Caco-2 (cell line): ENCODE measurements at regions of chr3 and their contacts with region 1.

Region 1: DNA sequence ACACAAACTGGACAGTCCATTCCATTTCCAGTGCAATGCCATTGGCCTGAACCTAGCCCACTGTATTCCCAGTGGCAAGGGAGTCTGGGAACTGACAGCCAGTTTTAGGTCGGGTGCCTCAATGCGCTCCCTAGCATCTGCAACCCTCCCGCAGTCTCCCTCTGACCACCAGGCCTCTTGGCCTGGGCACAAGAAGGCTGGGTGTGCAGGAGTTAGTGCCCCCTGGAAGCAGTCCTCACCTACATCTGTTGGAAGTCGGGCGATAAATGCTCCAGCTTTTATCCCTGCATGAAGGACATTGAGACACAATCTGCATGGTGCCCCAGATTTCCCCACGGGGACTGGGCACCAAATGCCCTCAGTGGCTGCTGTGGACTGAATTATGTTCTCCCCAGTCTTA is 12.7 kb downstream of the C3orf22 start:
- DNase-seq: no peak
- H3K4me3 ChIP-seq: no peak overlapping the region
- H3K4me3 Mint-ChIP-seq: no peak overlapping the region
- H3K27ac Mint-ChIP-seq: no peak overlapping the region
- H3K4me1 ChIP-seq: no peaks in the 10 kb centered on the region
- H3K4me1 Mint-ChIP-seq: no peaks in the 10 kb centered on the region
- H3K27me3 ChIP-seq: no peaks in the 10 kb centered on the region
- H3K27me3 Mint-ChIP-seq: peaks cover 6% of the 10 kb centered on the region
- CTCF ChIP-seq: no peak

Region 2: GRCh38 chr3:126342991-126343648 is 202.9 kb before region 1 on chr3:
- CTCF ChIA-PET with region 1: no interaction called
- POLR2A ChIA-PET with region 1: no interaction called
- intact Hi-C with region 1: no loop called
- DNase-seq: peak; percentile 42 to 50
- H3K4me3 ChIP-seq: no peak overlapping the region
- H3K4me3 Mint-ChIP-seq: no peak overlapping the region
- H3K27ac Mint-ChIP-seq: no peak overlapping the region
- H3K4me1 ChIP-seq: no peaks in the 10 kb centered on the region
- H3K4me1 Mint-ChIP-seq: no peaks in the 10 kb centered on the region
- H3K27me3 ChIP-seq: no peaks in the 10 kb centered on the region; the same call in 1 of the 2 replicates
- H3K27me3 Mint-ChIP-seq: peaks cover 7% of the 10 kb centered on the region
- CTCF ChIP-seq: peak in 1 of 2 experiments; percentile 27

Region 3: GRCh38 chr3:126481808-126482502 is 64.1 kb before region 1 on chr3:
- CTCF ChIA-PET with region 1: no interaction called
- POLR2A ChIA-PET with region 1: no interaction called
- intact Hi-C with region 1: no loop called
- DNase-seq: no peak
- H3K4me3 ChIP-seq: no peak overlapping the region
- H3K4me3 Mint-ChIP-seq: no peak overlapping the region
- H3K27ac Mint-ChIP-seq: no peak overlapping the region
- H3K4me1 ChIP-seq: no peaks in the 10 kb centered on the region
- H3K4me1 Mint-ChIP-seq: no peaks in the 10 kb centered on the region
- H3K27me3 ChIP-seq: no peaks in the 10 kb centered on the region
- H3K27me3 Mint-ChIP-seq: no peaks in the 10 kb centered on the region
- CTCF ChIP-seq: no peak

Region 4: DNA sequence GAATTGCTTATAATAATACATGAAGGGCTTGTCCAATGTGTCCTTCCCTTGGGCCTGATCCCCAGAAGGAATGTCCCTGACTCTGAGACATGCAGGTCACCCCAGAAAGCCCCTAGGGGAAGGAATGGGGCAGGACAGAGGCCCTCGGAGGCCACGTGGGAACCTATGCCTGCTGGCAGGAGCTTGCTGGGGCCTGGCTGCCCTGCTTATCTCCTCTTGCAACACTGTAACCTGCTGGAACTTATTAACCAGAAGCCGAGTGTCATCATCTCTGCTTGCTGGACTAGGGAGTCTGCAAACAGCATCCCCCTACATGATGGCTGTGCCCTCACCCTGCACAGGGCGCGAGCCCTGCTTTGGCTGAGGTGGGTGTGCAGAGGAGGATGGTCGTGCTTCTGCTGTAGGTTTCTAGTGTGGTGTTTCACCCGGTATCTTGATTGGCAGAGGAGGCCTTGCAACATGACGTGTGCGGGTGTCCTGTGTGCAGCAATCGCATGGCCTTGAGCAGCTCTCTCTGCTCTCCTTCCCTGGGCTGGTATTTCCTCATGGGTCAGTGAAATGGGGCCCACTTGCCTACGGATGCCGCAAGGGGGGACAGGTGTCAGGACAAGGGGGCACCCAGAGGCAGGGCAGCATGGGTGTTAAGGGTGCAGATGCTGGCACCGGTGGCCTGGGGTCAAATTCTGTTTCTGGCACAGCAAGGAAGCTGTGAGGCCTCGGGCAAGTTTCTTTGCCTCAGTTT is 17.0 kb before region 1 on chr3:
- CTCF ChIA-PET with region 1: no interaction called
- POLR2A ChIA-PET with region 1: no interaction called
- intact Hi-C with region 1: loop called (anchors 2 kb)
- DNase-seq: peak; percentile 93 to 94
- H3K4me3 ChIP-seq: no peak overlapping the region
- H3K4me3 Mint-ChIP-seq: peak overlapping the region; percentile 44
- H3K27ac Mint-ChIP-seq: peak overlapping the region; percentile 57
- H3K4me1 ChIP-seq: peaks cover 35% of the 10 kb centered on the region
- H3K4me1 Mint-ChIP-seq: peaks cover 24% of the 10 kb centered on the region
- H3K27me3 ChIP-seq: no peaks in the 10 kb centered on the region
- H3K27me3 Mint-ChIP-seq: no peaks in the 10 kb centered on the region
- CTCF ChIP-seq: peak; percentile 34 to 86

Region 5: GRCh38 chr3:126567696-126568438 is 21.9 kb after region 1 on chr3:
- CTCF ChIA-PET with region 1: no interaction called
- POLR2A ChIA-PET with region 1: no interaction called
- intact Hi-C with region 1: no loop called
- DNase-seq: peak in 1 of 2 experiments; percentile 34
- H3K4me3 ChIP-seq: no peak overlapping the region
- H3K4me3 Mint-ChIP-seq: no peak overlapping the region
- H3K27ac Mint-ChIP-seq: no peak overlapping the region
- H3K4me1 ChIP-seq: no peaks in the 10 kb centered on the region
- H3K4me1 Mint-ChIP-seq: no peaks in the 10 kb centered on the region
- H3K27me3 ChIP-seq: no peaks in the 10 kb centered on the region
- H3K27me3 Mint-ChIP-seq: peaks cover 3% of the 10 kb centered on the region
- CTCF ChIP-seq: peak in 1 of 2 experiments; percentile 26

Region 6: GRCh38 chr3:126630020-126630419 is 84.0 kb after region 1 on chr3:
- CTCF ChIA-PET with region 1: no interaction called
- POLR2A ChIA-PET with region 1: no interaction called
- intact Hi-C with region 1: no loop called
- DNase-seq: no peak
- H3K4me3 ChIP-seq: no peak overlapping the region
- H3K4me3 Mint-ChIP-seq: no peak overlapping the region
- H3K27ac Mint-ChIP-seq: no peak overlapping the region
- H3K4me1 ChIP-seq: no peaks in the 10 kb centered on the region
- H3K4me1 Mint-ChIP-seq: no peaks in the 10 kb centered on the region
- H3K27me3 ChIP-seq: no peaks in the 10 kb centered on the region
- H3K27me3 Mint-ChIP-seq: no peaks in the 10 kb centered on the region
- CTCF ChIP-seq: no peak